Naive thymus-derived CD4-positive, alpha-beta T cell (primary cell): ENCODE measurements at regions of chr11 and their contacts with region 1.

Region 1: GRCh38 chr11:587978-588380 is 11.7 kb downstream of the PHRF1 start:
- DNase-seq: peak; percentile 34 to 91 (median 78)
- ATAC-seq: peak; percentile 93
- H3K4me3 ChIP-seq: peak overlapping the region; percentile 16
- H3K4me3 Mint-ChIP-seq: peak overlapping the region; percentile 63 to 90 (median 76)
- H3K27ac ChIP-seq: peak overlapping the region; percentile 65
- H3K27ac Mint-ChIP-seq: peak overlapping the region; percentile 95 to 100 (median 99)
- H3K4me1 ChIP-seq: peaks cover 10 to 12% of the 10 kb centered on the region in 2 donors
- H3K4me1 Mint-ChIP-seq: peaks cover 9 to 38% (median 29%) of the 10 kb centered on the region in 7 donors
- H3K27me3 ChIP-seq: no peaks in the 10 kb centered on the region
- H3K27me3 Mint-ChIP-seq: no peaks in the 10 kb centered on the region

Region 2: GRCh38 chr11:615504-616319 is 27.7 kb after region 1 on chr11 and contains the start of gene IRF7:
- CTCF ChIA-PET with region 1: no interaction called
- POLR2A ChIA-PET with region 1: no interaction called
- intact Hi-C with region 1: loop called in 1 of 2 experiments (anchors 1 kb)
- DNase-seq: peak; percentile 70 to 91 (median 76)
- ATAC-seq: peak; percentile 91
- H3K4me3 ChIP-seq: peak within 1 kb of the TSS; percentile 97
- H3K4me3 Mint-ChIP-seq: peak within 1 kb of the TSS; percentile 80 to 94 (median 92)
- H3K27ac ChIP-seq: peak within 1 kb of the TSS; percentile 95
- H3K27ac Mint-ChIP-seq: peak within 1 kb of the TSS; percentile 83 to 97 (median 93)
- H3K4me1 ChIP-seq: peaks cover 8 to 22% of the 10 kb centered on the region in 2 donors
- H3K4me1 Mint-ChIP-seq: peaks cover 0 to 22% (median 15%) of the 10 kb centered on the region in 7 donors
- H3K27me3 ChIP-seq: no peaks in the 10 kb centered on the region
- H3K27me3 Mint-ChIP-seq: no peaks in the 10 kb centered on the region
- total RNA-seq, gene IRF7: 57.0 to 134 (median 64.6) TPM

Region 3: DNA sequence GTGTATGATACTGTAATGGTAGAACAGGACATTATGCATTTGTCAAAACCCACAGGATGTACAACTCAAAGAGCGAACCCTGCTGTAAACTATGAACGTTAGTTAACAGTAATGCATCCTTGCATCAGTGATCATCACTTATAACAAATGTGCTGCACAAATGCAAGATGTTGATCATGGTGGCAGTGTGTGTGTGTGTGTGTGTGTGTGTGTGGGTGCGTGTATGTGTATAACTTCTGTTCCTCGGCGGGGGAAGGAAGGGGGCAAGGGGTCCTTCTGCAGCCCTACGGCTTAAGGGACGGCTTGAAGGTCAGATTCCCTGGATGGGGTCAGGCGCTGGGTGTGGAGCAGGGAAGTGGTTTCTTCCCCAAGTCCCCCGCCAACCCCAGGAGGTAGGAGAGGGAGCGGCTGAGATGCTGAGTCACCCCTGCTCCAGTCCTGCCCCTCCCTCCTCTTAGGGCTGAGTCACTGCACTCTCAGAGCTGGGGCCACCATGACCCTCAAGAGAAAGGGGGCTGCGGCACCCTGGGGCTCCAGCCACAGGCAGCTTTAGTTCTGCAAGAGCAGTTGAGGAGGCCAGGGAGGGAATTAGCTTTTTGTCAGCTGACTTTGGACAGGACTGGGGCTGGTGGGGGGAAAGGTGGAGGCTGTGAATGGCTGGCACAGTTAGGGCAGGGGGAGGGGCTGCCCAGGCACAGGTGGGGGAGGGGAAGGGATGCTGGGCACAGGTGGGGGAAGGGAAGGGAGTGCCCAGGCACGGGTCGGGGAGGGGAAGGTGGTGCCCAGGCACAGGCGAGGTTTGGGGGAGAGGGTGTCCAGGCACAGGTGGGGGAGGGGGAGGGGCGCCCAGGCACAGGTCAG is 1184.5 kb after region 1 on chr11:
- CTCF ChIA-PET with region 1: no interaction called
- POLR2A ChIA-PET with region 1: no interaction called
- intact Hi-C with region 1: no loop called
- DNase-seq: peak in 4 of 9 donors; percentile 26 to 56 (median 39)
- ATAC-seq: peak; percentile 82
- H3K4me3 ChIP-seq: no peak overlapping the region
- H3K4me3 Mint-ChIP-seq: peak overlapping the region; percentile 10 to 74 (median 58)
- H3K27ac ChIP-seq: no peak overlapping the region
- H3K27ac Mint-ChIP-seq: peak overlapping the region in 7 of 9 donors; percentile 4 to 87 (median 62)
- H3K4me1 ChIP-seq: peaks cover 6 to 10% of the 10 kb centered on the region in 2 donors
- H3K4me1 Mint-ChIP-seq: peaks cover 9 to 34% (median 13%) of the 10 kb centered on the region in 7 donors
- H3K27me3 ChIP-seq: no peaks in the 10 kb centered on the region
- H3K27me3 Mint-ChIP-seq: peaks cover 0 to 17% (median 5%) of the 10 kb centered on the region in 5 donors